PC-9 (cell line): ENCODE measurements at regions of chr5 and their contacts with region 1.

Region 1: GRCh38 chr5:57834829-57835608 is 352.4 kb upstream of the ACTBL2 start:
- DNase-seq: no peak
- H3K4me3 ChIP-seq: no peak overlapping the region
- H3K27ac ChIP-seq: no peak overlapping the region
- H3K4me1 ChIP-seq: peaks cover 30% of the 10 kb centered on the region
- H3K27me3 ChIP-seq: no peaks in the 10 kb centered on the region
- CTCF ChIP-seq: no peak

Region 2: GRCh38 chr5:57692582-57693487 is 142.2 kb before region 1 on chr5:
- CTCF ChIA-PET with region 1: no interaction called
- POLR2A ChIA-PET with region 1: interaction called, 7 read pairs
- intact Hi-C with region 1: loop called (anchors 5 kb)
- DNase-seq: peak; percentile 83 to 86
- H3K4me3 ChIP-seq: no peak overlapping the region; the same call in 1 of the 2 replicates
- H3K27ac ChIP-seq: peak overlapping the region; percentile 91
- H3K4me1 ChIP-seq: peaks cover 25% of the 10 kb centered on the region
- H3K27me3 ChIP-seq: no peaks in the 10 kb centered on the region
- CTCF ChIP-seq: no peak

Region 3: GRCh38 chr5:57862457-57862911 is 27.5 kb after region 1 on chr5:
- CTCF ChIA-PET with region 1: no interaction called
- POLR2A ChIA-PET with region 1: interaction called, 6 read pairs
- intact Hi-C with region 1: loop called (anchors 1 kb)
- DNase-seq: peak; percentile 69 to 97
- H3K4me3 ChIP-seq: no peak overlapping the region
- H3K27ac ChIP-seq: peak overlapping the region; percentile 99
- H3K4me1 ChIP-seq: peaks cover 31% of the 10 kb centered on the region
- H3K27me3 ChIP-seq: no peaks in the 10 kb centered on the region
- CTCF ChIP-seq: no peak

Region 4: GRCh38 chr5:57976506-57976905 is 141.5 kb after region 1 on chr5:
- CTCF ChIA-PET with region 1: no interaction called
- POLR2A ChIA-PET with region 1: no interaction called
- intact Hi-C with region 1: no loop called
- DNase-seq: no peak
- H3K4me3 ChIP-seq: no peak overlapping the region
- H3K27ac ChIP-seq: no peak overlapping the region
- H3K4me1 ChIP-seq: no peaks in the 10 kb centered on the region
- H3K27me3 ChIP-seq: no peaks in the 10 kb centered on the region
- CTCF ChIP-seq: no peak